Esophagus muscularis mucosa (tissue), 4 donors: ENCODE measurements at regions of chr1 and their contacts with region 1.

Region 1: DNA sequence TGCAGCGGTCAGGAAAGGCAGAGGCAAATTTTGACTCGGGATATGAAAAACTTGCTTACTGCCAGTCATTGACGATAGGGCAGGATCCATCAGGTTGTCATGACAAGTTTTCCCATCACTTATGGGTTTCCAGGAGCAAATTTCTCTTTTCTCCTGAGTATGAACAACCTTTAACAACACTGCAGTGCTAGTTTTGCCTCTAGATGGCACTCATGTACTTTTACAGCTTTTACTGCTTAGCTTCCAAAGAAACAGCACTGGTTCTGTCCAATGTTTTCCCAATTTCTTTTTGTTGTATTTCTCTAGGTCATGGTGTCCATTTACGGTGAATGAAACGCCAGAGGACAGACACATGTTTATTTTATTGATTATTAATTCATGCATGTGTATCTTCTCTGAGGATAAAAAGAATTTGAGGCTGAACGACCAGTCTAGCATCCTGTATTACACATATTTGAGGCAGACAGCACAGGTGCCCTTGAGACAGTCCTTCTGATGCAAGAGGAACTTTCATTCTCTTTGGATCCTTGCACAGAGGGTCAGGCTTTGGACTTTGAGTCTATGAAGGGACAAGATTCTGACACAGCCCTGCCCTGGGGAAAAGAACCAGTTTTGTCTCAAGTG is 112.3 kb upstream of the TRABD2B start:
- DNase-seq: no peak
- H3K4me3 ChIP-seq: no peak overlapping the region
- H3K27ac ChIP-seq: no peak overlapping the region
- H3K4me1 ChIP-seq: peaks cover 0 to 6% (median 2%) of the 10 kb centered on the region in 4 donors
- H3K27me3 ChIP-seq: no peaks in the 10 kb centered on the region
- CTCF ChIP-seq: peak; percentile 76 to 95 (median 81)
- EP300 ChIP-seq: no peak
- POLR2A ChIP-seq: no peak

Region 2: GRCh38 chr1:48069662-48070432 is 39.7 kb before region 1 on chr1:
- intact Hi-C with region 1: no loop called
- DNase-seq: no peak
- H3K4me3 ChIP-seq: no peak overlapping the region
- H3K27ac ChIP-seq: peak overlapping the region in 1 of 4 donors; percentile 15
- H3K4me1 ChIP-seq: no peaks in the 10 kb centered on the region
- H3K27me3 ChIP-seq: no peaks in the 10 kb centered on the region
- CTCF ChIP-seq: no peak
- EP300 ChIP-seq: no peak
- POLR2A ChIP-seq: no peak

Region 3: GRCh38 chr1:48202030-48202752 is 92.7 kb after region 1 on chr1:
- intact Hi-C with region 1: loop called (anchors 1 kb)
- DNase-seq: no peak
- H3K4me3 ChIP-seq: no peak overlapping the region
- H3K27ac ChIP-seq: no peak overlapping the region
- H3K4me1 ChIP-seq: peaks cover 0 to 59% (median 45%) of the 10 kb centered on the region in 4 donors
- H3K27me3 ChIP-seq: no peaks in the 10 kb centered on the region
- CTCF ChIP-seq: peak; percentile 81 to 89 (median 84)
- EP300 ChIP-seq: no peak
- POLR2A ChIP-seq: no peak

Region 4: DNA sequence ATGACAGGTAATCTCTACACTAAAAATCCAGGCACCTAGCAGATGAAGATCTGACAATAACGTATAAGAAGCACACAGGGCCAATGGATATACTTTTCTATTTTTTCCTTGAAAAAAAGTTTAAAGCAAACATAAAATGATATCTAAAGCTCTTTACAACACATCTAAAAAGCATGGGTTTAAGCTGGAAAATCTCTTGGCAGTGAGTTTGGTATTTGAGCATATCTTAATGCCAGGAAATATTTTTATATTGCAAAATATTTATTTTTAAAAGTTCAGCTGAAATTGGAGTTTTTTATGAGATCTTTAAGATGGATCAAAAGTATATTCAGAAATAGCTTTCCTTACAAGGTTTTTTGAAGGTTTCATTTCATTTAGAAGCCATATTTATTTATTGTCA is 153.5 kb after region 1 on chr1:
- intact Hi-C with region 1: no loop called
- DNase-seq: no peak
- H3K4me3 ChIP-seq: no peak overlapping the region
- H3K27ac ChIP-seq: no peak overlapping the region
- H3K4me1 ChIP-seq: no peaks in the 10 kb centered on the region
- H3K27me3 ChIP-seq: no peaks in the 10 kb centered on the region
- CTCF ChIP-seq: no peak
- EP300 ChIP-seq: no peak
- POLR2A ChIP-seq: no peak

Region 5: DNA sequence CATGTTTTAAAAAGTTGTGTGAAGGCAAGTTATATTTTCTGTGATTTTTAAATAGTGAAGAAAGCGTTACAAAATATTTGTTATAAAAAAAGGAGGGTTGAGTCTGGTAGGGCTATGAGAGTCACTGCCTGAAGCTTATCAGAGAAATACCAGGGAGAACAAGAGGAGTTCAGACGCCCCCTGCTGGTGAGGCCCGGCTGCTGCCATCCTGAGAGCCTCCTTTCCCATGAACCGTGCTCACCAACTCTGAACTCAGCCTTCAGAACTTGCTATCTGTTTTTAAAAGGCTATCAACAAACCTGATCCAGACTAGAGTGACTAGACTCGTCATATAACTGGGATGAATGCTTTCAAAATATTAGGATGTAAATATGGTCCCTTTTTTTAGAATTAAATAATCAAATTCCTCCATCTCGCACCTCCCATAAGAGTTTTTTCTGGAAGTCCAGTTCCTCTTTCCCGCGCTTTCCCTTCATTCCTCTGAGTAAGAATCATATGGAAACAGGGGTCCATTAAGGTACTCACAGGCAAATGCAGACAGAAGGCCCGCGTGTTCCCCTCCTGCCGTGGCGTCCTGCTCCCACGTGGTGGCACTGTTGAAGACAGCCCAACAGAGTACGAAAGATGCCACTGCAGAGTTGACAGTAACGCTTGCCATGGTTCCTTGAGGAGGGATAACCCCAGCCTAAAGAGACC is 388.7 kb after region 1 on chr1:
- intact Hi-C with region 1: loop called (anchors 5 kb)
- DNase-seq: no peak
- H3K4me3 ChIP-seq: no peak overlapping the region
- H3K27ac ChIP-seq: no peak overlapping the region
- H3K4me1 ChIP-seq: peaks cover 0 to 29% (median 17%) of the 10 kb centered on the region in 4 donors
- H3K27me3 ChIP-seq: no peaks in the 10 kb centered on the region
- CTCF ChIP-seq: peak; percentile 86 to 96 (median 89)
- EP300 ChIP-seq: no peak
- POLR2A ChIP-seq: no peak